ENCODE measurements at regions of chr6 and their contacts with region 1.

Region 1: DNA sequence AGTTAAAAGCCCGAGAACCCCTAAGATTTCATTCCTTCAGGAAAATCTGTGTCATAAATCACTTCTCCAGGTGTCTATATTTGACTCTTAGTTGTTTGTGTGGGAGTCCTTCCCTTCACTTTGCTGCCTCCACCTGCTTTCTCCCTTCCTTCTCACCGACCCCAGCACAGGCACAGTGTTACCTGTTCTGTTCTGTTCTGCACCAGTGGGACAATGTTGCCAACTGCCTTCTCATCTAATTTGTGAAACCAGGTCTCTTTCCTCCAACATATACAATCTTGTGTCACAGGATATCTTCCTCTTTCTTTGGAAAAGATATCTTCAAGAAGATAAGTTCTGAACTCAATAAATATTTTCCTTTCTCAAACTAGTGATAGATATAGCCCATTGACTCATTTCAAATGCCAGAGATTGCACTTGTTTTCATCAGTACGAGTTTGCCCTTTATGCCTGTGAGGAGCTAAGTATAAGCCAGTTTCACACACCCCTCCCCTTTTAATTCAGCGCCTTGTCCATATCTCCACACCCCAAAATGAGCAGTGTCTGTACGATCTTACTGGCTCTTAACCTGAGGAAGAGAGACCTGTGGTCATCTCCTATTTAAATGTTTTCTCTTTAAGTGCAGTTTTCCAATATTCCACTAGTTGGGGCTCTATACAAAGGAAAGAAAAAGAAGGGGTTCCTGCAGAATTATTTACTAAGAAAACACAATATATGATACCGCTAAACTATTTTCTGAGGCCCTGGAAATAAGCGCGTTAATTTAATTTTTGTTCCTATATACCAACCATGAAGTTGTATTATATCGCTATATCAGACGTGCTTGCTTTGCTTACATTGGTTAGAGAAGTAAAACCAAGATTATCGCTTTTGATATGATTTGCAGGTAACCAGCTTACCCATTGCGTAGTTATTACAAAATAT is 81.6 kb upstream of the PREP start:
- DNase-seq: no peak
- H3K4me3 ChIP-seq: no peak overlapping the region
- H3K27ac ChIP-seq: no peak overlapping the region
- H3K4me1 ChIP-seq: no peaks in the 10 kb centered on the region
- H3K27me3 ChIP-seq: no peaks in the 10 kb centered on the region
- CTCF ChIP-seq: peak; percentile 59 to 92 (median 87)

Region 2: DNA sequence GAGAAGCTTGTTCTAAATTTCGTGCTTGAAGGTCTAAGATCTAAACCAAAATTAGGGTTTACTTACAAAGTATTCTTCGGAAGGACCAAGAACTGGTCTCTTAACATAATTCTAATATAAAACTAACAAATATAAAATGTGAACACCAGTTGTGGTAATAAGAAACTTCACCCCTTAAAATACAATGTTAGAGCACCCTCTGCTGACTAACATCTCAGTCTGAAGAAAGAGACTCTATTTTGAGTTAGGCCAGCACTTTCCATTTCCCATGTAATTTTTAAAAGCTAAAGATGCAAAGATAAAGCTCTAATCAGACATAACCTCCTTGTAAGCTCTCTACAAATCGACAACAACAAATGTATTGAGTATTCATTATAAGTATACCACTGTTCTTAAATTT is 816.4 kb after region 1 on chr6:
- intact Hi-C with region 1: loop called (anchors 5 kb)
- DNase-seq: no peak
- H3K4me3 ChIP-seq: no peak overlapping the region
- H3K27ac ChIP-seq: no peak overlapping the region
- H3K4me1 ChIP-seq: no peaks in the 10 kb centered on the region
- H3K27me3 ChIP-seq: no peaks in the 10 kb centered on the region
- CTCF ChIP-seq: peak in 2 of 3 experiments; percentile 16 to 49

Region 3: GRCh38 chr6:107115581-107116327 is 1631.3 kb after region 1 on chr6:
- intact Hi-C with region 1: no loop called
- DNase-seq: peak in 1 of 2 donors; percentile 59
- H3K4me3 ChIP-seq: peak overlapping the region; percentile 90 to 97
- H3K27ac ChIP-seq: peak overlapping the region in 1 of 2 donors; percentile 68
- H3K4me1 ChIP-seq: peaks cover 9 to 11% of the 10 kb centered on the region in 2 donors
- H3K27me3 ChIP-seq: no peaks in the 10 kb centered on the region
- CTCF ChIP-seq: no peak

Measured in ascending aorta (tissue), 2 donors.